Activated CD4-positive, alpha-beta T cell treated with anti-CD3 and anti-CD28 coated beads, Interleukin-2, amount 10 ng/mL, durations not matched to agents 24 days and 14 days (primary cell): ENCODE measurements at regions of chr11 and their contacts with region 1.

Region 1: DNA sequence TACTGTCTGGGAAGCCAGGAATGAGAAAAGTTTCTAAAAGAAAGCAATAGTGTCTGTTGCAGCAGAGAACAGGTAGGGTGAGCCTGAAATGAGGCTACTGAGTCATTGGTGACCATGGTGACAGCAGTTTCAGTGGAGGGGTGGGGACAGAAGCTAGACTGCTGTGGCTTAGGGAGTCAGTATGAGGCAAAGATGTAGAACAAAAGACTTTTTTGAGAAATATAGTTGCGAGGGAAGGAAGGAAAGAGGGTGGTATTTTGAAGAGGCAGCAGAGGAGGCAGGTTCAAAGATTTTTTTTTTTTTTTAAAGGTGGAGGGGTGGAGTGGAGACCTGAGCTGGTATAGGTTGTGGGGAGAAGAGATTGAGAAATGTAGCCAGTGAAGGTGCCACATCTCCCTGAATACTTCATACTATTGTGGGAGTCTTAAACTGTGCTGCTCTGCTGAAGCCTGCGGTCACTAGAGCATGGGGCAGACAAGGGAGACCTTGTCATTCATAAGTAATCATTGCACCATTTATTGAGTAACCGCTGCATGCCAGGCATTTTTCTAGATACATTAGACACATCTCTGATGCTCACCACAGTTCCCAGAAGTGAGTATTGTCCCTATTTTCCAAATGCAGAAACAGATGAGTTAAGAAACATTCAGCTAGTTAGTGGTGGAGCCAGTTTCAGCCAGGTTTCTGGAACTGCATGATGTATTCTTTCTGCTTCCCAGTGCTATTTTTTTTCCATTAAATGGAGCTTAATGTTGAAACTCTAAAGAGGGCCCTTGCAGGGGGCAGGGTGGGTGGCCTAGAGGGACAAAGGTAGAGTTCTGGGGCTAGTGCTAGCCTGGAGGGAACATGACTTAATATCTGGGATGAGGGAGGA is 49.9 kb downstream of the STIM1 start:
- DNase-seq: peak; percentile 88
- H3K4me3 Mint-ChIP-seq: peak overlapping the region; percentile 43
- H3K27ac Mint-ChIP-seq: peak overlapping the region; percentile 75
- H3K4me1 Mint-ChIP-seq: peaks cover 62% of the 10 kb centered on the region
- H3K27me3 Mint-ChIP-seq: no peaks in the 10 kb centered on the region

Region 2: DNA sequence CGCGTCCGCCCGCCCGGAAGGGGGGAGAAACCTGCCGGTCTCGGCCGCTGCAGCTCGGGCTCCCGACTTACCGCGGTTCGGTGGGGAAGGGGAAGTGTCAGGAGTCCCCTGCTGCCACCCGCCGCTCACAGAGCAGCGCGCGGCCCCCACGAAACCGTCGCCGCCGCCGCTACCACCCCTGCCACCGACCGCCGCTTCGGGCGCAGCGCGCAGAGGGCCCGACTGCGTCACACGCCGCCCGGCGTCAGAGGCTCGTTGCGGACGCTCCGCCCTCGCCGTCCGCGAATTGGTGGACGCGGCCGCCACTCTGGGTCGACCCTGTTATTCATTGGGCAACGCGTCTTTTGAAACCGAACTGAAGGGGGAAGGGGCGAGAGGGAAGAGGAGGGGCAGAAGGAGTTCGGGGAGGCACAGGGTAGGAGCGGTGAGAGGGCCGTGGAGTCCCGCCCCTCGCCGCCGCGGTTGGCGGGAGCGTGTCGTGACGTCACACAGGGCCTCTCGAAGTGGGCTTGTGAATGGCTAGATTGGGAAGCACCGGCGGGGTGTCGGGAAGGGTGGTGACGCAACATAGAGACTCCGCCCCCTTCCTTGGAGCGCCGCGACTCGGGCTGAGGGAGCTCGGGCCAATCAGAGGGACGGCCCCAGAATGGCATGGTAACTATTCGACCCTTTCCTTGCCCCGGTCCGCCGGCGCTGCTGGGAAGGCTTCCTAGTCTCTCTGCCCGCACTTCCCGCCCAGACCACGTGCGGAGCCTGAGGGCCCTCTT is 107.8 kb before region 1 on chr11 and contains the start of gene NUP98:
- intact Hi-C with region 1: no loop called
- DNase-seq: peak; percentile 100
- H3K4me3 Mint-ChIP-seq: peak within 1 kb of the TSS; percentile 99
- H3K27ac Mint-ChIP-seq: peak within 1 kb of the TSS; percentile 99
- H3K4me1 Mint-ChIP-seq: peaks cover 35% of the 10 kb centered on the region
- H3K27me3 Mint-ChIP-seq: no peaks in the 10 kb centered on the region
- total RNA-seq, gene NUP98: 122 and 129 TPM in 2 replicates

Region 3: DNA sequence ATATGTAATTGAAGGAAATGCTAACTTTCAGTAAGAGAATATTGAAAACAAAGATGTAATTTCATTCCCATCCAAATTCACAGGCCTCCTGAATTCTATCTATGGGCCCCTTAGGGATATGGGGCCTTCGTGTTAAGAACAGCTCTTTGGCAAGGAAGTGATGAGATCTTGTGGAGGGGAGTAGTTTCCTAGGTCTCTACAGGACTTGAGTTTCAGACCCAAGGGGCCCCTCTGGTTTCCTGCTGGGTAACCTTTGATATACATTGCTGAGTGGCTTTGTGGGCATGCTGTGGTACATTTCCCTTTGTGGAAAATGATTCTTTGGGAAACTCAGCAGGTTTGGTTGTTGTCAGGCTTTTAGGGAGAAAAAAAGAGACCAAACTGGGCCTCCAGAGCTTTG is 43.6 kb before region 1 on chr11:
- intact Hi-C with region 1: loop called (anchors 1 kb)
- DNase-seq: peak; percentile 74
- H3K4me3 Mint-ChIP-seq: peak overlapping the region; percentile 98
- H3K27ac Mint-ChIP-seq: peak overlapping the region; percentile 91
- H3K4me1 Mint-ChIP-seq: peaks cover 79% of the 10 kb centered on the region
- H3K27me3 Mint-ChIP-seq: no peaks in the 10 kb centered on the region

Region 4: DNA sequence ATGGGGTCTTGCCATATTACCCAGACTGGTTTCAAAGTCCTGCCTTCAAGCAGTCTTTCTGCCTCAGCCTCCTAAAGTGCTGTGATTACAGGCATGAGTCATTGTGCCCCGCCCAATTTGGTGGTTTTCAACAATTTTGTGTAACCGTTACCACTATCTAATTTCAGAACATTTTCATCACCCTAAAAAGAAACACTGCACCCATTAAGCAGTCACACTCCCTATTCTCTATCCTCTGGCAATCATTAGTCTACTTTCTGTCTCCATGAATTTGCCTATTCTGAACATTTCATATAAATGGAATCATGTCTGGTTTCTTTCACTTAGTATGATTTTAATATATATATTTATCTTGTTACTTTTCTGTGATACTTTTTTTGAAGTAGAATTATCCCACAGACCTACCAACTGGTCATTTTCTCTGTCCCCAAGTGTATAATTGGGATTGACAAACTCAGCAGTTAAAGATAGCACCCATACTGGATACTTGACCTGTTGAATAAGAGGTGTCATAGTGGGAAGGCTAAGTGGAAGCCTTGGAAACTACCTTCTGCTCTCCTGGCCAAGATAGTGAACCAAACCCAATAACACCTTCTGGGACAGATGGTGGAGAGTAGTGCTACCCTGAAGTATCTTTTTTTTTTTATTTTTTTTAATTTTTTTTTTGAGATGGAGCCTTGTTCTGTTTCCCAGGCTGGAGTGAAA is 15.0 kb after region 1 on chr11:
- intact Hi-C with region 1: loop called (anchors 2 kb)
- DNase-seq: peak; percentile 89
- H3K4me3 Mint-ChIP-seq: peak overlapping the region; percentile 22
- H3K27ac Mint-ChIP-seq: peak overlapping the region; percentile 31
- H3K4me1 Mint-ChIP-seq: peaks cover 49% of the 10 kb centered on the region
- H3K27me3 Mint-ChIP-seq: no peaks in the 10 kb centered on the region

Region 5: DNA sequence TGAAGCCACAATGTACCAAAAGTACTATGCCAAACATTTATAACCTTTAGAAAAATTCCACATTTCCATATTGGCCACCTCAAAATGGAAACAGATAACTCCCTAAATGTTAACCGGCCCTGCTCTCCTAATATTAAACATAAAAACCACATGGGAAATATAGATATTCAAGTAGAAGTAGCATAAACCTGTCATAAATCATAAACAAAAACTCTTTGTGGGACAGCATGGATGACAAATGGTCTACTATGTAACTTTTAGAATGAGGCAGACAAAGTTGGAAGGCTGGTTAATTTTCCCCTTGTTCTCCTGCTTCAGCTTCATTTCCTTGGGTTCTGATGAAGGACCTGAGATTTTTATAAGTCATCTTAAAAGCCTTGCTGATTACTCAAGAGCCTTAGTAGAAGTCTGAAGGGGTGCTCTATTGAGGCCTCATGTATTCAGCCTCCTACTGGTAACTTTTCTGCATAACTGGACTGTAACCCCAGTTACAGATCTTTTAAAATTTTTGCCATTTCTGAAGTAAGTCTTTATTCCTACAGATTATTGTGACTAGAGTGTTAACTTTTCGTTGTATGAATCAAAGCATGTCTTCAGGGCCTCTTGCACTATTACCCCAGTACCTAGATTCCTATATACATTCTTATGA is 66.6 kb after region 1 on chr11:
- intact Hi-C with region 1: loop called (anchors 2 kb)
- DNase-seq: no peak
- H3K4me3 Mint-ChIP-seq: no peak overlapping the region
- H3K27ac Mint-ChIP-seq: no peak overlapping the region
- H3K4me1 Mint-ChIP-seq: peaks cover 55% of the 10 kb centered on the region
- H3K27me3 Mint-ChIP-seq: no peaks in the 10 kb centered on the region

Region 6: DNA sequence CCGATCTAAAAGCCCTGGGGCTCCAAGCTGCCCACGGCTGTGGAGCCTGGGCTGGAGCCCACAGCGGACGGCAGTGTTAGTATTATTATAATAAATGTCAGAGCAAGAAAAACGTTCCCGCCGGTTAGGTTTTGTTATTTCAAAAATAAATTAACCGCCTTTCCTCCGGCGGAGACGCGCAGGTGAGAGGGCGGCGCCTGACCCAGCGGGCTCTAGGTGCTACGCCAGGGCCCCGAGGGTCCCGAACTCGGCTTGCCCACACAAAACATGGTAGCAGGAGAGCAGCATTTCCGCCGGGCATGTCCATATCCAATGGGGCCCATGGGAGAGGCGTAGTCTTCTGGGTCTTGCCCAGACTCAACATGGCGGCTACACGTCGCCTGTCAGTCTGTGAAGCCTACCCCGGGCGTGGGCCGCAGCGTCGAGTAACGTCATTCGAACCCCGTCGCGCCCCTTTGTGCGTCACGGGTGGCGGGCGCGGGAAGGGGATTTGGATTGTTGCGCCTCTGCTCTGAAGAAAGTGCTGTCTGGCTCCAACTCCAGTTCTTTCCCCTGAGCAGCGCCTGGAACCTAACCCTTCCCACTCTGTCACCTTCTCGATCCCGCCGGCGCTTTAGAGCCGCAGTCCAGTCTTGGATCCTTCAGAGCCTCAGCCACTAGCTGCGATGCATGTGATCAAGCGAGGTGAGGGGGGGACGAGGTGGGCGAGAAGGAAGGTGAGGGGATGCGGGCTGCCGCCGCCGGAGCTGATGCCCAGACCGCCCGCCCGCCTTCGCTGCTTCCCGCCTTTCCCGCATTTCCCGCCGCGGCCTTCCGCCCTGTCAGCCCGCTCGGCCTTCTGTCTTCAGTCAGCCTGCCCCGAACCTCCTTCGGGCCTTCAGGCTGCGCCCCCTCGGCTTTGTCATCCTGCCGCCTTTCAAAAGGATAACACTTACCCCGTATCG is 189.3 kb after region 1 on chr11 and contains the start of gene RRM1:
- intact Hi-C with region 1: no loop called
- DNase-seq: peak; percentile 98
- H3K4me3 Mint-ChIP-seq: peak within 1 kb of the TSS; percentile 98
- H3K27ac Mint-ChIP-seq: peak within 1 kb of the TSS; percentile 97
- H3K4me1 Mint-ChIP-seq: peaks cover 78% of the 10 kb centered on the region
- H3K27me3 Mint-ChIP-seq: no peaks in the 10 kb centered on the region
- total RNA-seq, gene RRM1: 166 and 184 TPM in 2 replicates